ENCODE measurements at regions of chr7 and their contacts with region 1.

Region 1: DNA sequence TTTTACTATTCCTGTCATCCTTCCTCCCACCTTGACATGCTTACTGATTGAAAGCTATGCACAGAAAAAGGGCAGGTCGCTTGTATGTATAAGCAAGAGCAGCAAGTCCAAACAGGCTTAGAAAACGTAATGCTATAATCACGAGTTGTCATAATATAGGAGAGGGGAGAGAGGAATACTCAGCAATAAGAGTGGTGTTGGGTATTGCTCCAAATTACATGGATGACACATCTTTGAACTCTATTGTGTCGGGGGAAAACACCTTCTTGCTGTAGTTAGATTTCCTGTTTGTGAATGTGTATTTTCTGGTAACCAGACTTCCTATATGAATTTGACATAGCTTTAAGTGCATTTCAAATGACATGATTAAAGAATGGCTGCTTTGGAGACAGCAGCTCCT is 7.5 kb downstream of the MET start:
- DNase-seq: no peak
- ATAC-seq: no peak
- H3K4me3 ChIP-seq: no peak overlapping the region
- H3K27ac ChIP-seq: no peak overlapping the region
- H3K4me1 ChIP-seq: peaks cover 0 to 10% (median 0%) of the 10 kb centered on the region in 12 donors
- H3K27me3 ChIP-seq: no peaks in the 10 kb centered on the region
- CTCF ChIP-seq: no peak
- POLR2A ChIP-seq: no peak

Region 2: GRCh38 chr7:116041615-116042014 is 637.9 kb before region 1 on chr7:
- intact Hi-C with region 1: no loop called
- DNase-seq: no peak
- ATAC-seq: no peak
- H3K4me3 ChIP-seq: no peak overlapping the region
- H3K27ac ChIP-seq: no peak overlapping the region
- H3K4me1 ChIP-seq: peaks cover 0 to 2% (median 0%) of the 10 kb centered on the region in 12 donors
- H3K27me3 ChIP-seq: peaks cover 0 to 4% (median 0%) of the 10 kb centered on the region in 9 donors
- CTCF ChIP-seq: no peak
- POLR2A ChIP-seq: no peak

Region 3: DNA sequence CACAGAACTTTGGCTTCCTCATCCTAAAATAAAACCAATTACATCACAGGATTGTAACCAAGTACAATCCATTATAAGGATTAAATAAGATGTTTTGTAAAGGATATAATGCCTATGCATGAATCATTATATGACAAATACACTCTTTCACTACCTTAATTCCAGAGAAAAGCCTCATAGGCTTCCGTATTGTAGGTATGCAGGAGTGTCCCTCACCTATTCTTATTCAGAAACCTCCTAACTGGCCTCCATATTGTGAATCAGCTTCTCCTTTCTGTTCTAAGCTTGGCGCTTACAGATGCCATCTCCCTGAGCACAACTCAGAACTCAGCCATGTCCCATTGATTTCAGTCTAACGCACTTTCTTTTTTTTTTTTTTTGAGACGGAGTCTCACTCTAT is 113.3 kb after region 1 on chr7:
- intact Hi-C with region 1: loop called in 4 of 10 experiments (anchors 5 kb)
- DNase-seq: no peak
- ATAC-seq: no peak
- H3K4me3 ChIP-seq: no peak overlapping the region
- H3K27ac ChIP-seq: no peak overlapping the region
- H3K4me1 ChIP-seq: peaks cover 0 to 6% (median 0%) of the 10 kb centered on the region in 12 donors
- H3K27me3 ChIP-seq: no peaks in the 10 kb centered on the region
- CTCF ChIP-seq: no peak
- POLR2A ChIP-seq: no peak

Measured in heart left ventricle (tissue), 16 donors.